Panc1 (cell line): ENCODE measurements at regions of chr14 and their contacts with region 1.

Region 1: DNA sequence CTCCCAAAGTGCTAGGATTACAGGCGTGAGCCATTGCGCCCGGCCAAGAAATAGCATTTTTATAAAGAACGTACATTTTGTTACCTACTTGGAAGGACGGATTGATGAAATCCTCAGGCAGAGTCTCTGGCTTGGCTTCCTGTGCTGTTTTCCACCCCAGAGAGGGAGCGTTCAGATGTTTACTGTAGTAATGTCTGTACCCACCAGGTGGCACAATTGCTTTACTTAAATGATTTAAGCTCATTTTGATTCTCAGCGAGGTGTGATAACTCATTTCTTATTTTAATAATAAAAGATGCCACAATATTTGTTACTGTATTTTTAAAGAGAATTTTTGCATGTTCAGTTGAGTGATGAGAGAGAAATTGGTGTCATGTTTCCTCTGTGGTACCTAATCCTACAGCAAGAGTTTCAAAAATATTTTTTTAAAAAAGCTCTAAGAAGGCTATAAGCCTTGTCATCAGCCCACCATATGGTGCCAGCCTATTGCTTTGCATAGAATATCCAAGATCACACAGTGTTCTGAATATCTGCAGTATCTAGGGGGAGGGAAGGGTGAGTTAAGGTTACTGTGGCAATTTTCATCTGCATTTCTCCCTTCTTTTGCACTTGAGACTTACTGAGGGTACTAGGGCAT is 82.6 kb upstream of the TRAF3 start:
- DNase-seq: peak; percentile 39
- ATAC-seq: peak; percentile 77; the same call in 1 of the 2 replicates
- H3K4me3 ChIP-seq: no peak overlapping the region
- H3K27ac ChIP-seq: 0 out of 2 replicates have a peak overlapping the region, but pooled peaks have one; percentile 12
- H3K4me1 ChIP-seq: peaks cover 28% of the 10 kb centered on the region
- H3K27me3 ChIP-seq: no peaks in the 10 kb centered on the region
- CTCF ChIP-seq: peak; percentile 72

Region 2: GRCh38 chr14:102481791-102482238 is 212.8 kb before region 1 on chr14:
- CTCF ChIA-PET with region 1: interaction called, 10 read pairs
- POLR2A ChIA-PET with region 1: no interaction called
- in situ Hi-C with region 1: no loop called
- intact Hi-C with region 1: no loop called
- DNase-seq: no peak
- ATAC-seq: peak; percentile 85
- H3K4me3 ChIP-seq: no peak overlapping the region
- H3K27ac ChIP-seq: no peak overlapping the region
- H3K4me1 ChIP-seq: no peaks in the 10 kb centered on the region; the same call in 1 of the 2 replicates
- H3K27me3 ChIP-seq: no peaks in the 10 kb centered on the region
- CTCF ChIP-seq: no peak

Region 3: DNA sequence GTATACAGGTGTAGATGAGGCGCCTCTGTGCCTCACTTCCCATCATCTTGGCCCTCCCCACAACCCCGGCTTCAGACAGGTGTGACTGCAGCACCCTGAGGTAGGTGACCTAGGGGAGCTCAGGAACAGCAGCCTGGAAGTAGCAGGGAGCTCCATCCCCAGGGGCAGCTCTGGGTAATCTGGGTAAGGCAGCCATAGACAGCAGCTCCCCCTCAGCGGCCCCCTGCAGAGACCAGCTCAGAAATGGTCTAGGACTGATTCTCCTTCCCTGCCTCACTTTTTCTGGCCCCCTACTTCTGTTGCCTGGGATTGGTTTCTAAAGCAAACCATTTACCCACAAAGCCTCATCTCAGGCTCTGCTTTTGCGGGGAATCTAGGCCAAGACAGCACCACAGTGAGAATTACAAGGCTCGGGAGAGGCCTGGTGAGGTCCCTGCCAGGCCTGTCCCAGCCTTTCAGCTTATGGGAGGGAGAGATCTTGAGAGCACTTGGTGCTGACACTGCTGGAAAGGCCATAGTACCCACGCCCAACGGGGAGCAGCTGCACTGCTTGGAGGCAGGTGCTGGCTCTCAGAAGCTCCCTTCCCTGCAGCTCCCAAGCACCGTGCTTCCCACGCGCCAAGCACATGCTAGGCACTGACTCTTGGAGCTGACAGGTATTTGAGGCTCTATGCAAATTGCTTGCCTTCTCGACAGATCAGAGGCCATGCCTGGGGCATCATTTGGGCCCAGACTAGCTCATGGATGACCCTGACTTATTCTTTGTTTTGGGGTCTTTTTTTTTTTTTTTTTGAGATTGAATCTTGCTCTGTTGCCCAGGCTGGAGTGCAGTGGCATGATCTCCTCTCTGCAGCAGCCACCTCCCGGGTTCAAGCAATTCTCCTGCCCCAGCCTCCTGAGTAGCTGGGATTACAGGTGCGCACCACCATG is 37.5 kb after region 1 on chr14:
- CTCF ChIA-PET with region 1: no interaction called
- POLR2A ChIA-PET with region 1: interaction called, 15 read pairs
- in situ Hi-C with region 1: no loop called
- intact Hi-C with region 1: no loop called
- DNase-seq: no peak
- ATAC-seq: 0 out of 2 replicates have a peak, but pooled peaks have one; percentile 34
- H3K4me3 ChIP-seq: no peak overlapping the region
- H3K27ac ChIP-seq: no peak overlapping the region
- H3K4me1 ChIP-seq: no peaks in the 10 kb centered on the region
- H3K27me3 ChIP-seq: no peaks in the 10 kb centered on the region
- CTCF ChIP-seq: no peak

Region 4: DNA sequence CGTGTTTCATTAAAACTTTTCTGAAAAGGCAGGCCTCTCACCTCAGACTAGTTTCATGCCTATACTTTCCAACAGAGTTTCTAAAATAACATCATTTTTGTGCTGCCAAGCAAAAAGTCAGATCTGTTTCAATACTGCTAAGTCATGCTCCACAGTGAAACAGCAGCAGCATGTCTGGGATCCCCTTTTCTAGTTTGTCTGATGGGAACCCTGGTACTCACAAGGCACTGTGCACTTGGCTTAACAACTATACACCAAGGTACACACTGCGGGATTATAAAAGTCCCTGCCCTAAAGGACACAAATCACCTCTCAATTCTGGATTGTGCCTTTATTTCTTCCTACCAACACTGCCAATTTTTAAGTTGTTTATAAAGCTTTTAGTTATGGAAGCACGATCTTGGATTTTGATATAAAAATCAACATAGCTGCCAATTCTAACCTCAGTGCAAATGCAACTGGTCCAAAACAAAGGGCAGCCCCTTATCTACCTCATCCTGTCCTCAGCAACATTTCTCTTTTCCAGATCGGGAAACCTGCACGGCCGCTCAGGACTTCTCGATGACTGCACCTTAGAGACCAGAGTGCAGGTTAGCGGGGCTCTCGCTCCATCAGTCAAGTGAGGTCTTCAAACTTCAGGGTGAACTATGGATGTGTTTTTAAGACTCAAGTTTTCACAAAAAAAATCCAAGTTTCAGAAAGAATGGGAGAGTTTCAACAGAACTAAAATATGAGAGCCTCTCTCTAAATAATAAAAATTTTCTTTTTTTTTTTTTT is 637.7 kb after region 1 on chr14:
- CTCF ChIA-PET with region 1: no interaction called
- POLR2A ChIA-PET with region 1: interaction called, 14 read pairs
- in situ Hi-C with region 1: no loop called
- intact Hi-C with region 1: no loop called
- DNase-seq: no peak
- ATAC-seq: no peak
- H3K4me3 ChIP-seq: peak overlapping the region; percentile 75 to 91
- H3K27ac ChIP-seq: peak overlapping the region; percentile 87; the same call in 1 of the 2 replicates
- H3K4me1 ChIP-seq: peaks cover 22% of the 10 kb centered on the region
- H3K27me3 ChIP-seq: no peaks in the 10 kb centered on the region
- CTCF ChIP-seq: no peak